ENCODE measurements at regions of chr5 and their contacts with region 1.

Region 1: GRCh38 chr5:139633295-139634027 is 14.7 kb upstream of the CXXC5 start:
- DNase-seq: peak; percentile 83
- H3K4me3 Mint-ChIP-seq: no peak overlapping the region
- H3K27ac Mint-ChIP-seq: no peak overlapping the region
- H3K4me1 Mint-ChIP-seq: peaks cover 34% of the 10 kb centered on the region
- H3K27me3 Mint-ChIP-seq: no peaks in the 10 kb centered on the region
- CTCF ChIP-seq: peak; percentile 99

Region 2: GRCh38 chr5:139422307-139422893 is 211.1 kb before region 1 on chr5:
- CTCF ChIA-PET with region 1: interaction called, 15 read pairs
- POLR2A ChIA-PET with region 1: interaction called, 3 read pairs
- intact Hi-C with region 1: loop called (anchors 2 kb)
- DNase-seq: peak; percentile 84
- H3K4me3 Mint-ChIP-seq: no peak overlapping the region
- H3K27ac Mint-ChIP-seq: peak overlapping the region; percentile 57
- H3K4me1 Mint-ChIP-seq: no peaks in the 10 kb centered on the region
- H3K27me3 Mint-ChIP-seq: no peaks in the 10 kb centered on the region
- CTCF ChIP-seq: peak; percentile 93

Region 3: DNA sequence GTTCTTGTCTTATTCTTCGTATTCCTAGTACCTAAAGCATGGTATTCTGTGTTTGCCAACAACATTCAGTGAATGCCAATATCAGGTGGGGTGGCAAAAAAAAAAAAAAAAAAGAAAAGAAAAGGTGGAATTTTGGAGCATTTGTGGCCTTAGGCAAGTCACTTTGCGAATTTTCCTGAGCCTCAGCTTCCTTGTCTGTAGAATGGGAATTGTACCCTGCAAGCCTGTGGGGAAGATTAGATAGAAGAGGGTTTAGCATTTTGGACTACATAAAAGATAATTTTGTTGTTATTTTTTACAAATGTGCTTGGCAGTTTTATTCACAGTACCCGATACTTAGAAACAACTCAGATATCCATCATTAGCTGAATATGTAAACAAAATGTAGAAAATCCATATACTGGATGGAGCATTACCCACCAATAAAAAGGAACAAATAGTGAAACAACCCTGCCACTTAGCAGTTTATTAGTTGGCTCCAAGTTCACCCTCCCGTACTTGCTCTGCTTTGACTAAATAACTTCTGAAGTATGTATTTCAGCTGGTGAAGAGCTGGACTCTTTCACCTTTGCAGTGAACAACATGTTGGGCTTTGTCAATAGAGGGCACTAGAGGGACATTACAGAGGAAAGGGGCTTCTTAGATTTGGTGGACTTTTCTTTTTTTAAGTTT is 58.7 kb before region 1 on chr5:
- CTCF ChIA-PET with region 1: interaction called, 36 read pairs
- POLR2A ChIA-PET with region 1: interaction called, 4 read pairs
- intact Hi-C with region 1: loop called (anchors 1 kb)
- DNase-seq: peak; percentile 70
- H3K4me3 Mint-ChIP-seq: no peak overlapping the region
- H3K27ac Mint-ChIP-seq: peak overlapping the region; percentile 71
- H3K4me1 Mint-ChIP-seq: peaks cover 42% of the 10 kb centered on the region
- H3K27me3 Mint-ChIP-seq: no peaks in the 10 kb centered on the region
- CTCF ChIP-seq: peak; percentile 75

Region 4: DNA sequence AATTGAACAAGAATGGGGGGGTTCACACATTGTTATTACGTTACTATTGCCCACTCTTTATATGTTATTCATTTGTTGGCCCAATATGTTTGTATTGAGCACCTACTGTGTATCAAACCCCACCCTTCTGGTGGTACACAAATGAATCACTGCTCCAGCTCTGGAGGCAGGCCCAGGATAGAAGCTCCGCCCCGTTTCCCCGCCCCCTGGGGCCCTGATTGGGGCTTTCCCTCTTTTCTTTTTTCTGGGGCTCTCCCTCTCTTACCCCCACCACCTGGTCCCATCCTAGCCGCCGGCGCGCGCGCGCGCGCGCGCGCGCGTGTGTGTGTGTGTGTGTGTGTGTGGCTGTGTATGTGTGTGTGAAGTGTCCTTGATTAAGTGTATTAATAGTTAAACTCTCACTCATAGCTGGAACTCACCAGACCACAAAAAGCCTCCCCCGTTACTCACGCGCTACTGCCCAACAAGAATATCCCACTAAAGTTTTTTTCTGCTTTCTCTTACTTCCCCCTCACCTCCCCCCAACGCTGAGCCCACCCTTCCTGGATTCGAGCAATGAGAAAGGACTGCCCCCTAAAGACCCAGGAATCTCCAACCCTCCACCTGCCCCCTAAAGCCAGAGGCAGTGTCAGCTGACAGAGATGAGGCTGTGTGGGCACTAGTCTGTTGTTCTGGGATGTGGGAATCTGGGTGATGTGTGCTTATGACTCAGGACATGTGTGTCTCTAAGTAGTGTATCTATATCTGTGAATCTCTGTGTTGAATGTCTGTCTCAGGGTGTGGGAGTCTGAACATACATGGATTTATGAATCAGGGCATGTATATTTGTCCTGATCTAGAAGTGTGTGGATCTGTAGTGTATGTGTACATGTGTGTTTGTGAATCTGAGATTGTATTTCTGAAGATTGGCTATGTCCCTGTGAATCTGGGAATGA is 18.7 kb after region 1 on chr5:
- CTCF ChIA-PET with region 1: interaction called, 62 read pairs
- POLR2A ChIA-PET with region 1: interaction called, 46 read pairs
- intact Hi-C with region 1: loop called (anchors 1 kb)
- DNase-seq: peak; percentile 87
- H3K4me3 Mint-ChIP-seq: peak overlapping the region; percentile 87
- H3K27ac Mint-ChIP-seq: peak overlapping the region; percentile 33
- H3K4me1 Mint-ChIP-seq: peaks cover 30% of the 10 kb centered on the region
- H3K27me3 Mint-ChIP-seq: no peaks in the 10 kb centered on the region
- CTCF ChIP-seq: no peak

Region 5: DNA sequence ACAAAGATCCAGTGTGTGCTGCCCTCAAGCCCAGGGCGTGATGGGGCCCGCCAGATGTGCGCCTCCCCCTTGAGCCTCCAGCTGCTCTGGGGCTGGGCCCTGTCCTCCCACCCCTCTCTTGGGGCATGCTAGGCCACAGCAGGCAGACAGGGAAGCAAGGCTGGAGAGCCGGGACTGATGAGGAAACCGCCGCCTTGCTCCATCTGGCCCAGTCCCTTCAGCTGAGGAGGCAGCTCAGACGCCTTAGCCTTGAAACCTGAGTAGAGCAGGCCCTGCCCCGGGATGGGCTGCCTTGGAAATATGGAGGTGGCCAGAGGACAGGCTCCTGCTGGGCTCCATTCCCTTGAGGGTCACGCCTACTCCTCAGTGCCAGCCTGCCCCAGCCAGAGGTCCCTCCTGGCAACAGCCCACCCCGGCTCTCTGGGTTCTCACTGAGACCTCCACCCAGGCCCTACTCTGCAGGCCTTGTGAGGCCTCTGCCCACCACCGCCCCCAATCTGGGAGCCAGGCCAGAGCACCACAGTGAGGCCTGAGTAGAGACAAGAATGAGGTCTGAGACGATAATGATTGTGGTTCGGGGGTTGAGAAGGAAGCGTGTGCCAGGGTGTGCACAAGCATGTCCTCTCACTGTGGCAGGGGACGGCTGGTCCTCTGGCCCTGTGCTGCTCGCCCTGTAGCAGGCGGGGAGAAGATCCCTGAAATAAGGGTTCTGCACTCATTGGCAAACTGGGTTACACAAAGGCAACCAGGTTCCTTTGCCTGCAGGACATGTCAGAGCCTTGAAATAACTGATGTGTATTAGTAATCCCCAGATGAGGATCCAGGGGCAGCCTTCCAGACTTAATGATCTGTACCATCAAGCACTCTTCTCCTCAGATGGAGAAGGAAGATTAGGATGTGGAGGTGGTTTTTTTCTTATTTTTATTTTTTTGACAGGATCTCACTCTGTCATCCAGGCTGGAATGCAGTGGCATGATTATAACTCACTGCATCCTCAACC is 45.6 kb after region 1 on chr5:
- CTCF ChIA-PET with region 1: interaction called, 18 read pairs
- POLR2A ChIA-PET with region 1: no interaction called
- intact Hi-C with region 1: no loop called
- DNase-seq: no peak
- H3K4me3 Mint-ChIP-seq: no peak overlapping the region
- H3K27ac Mint-ChIP-seq: no peak overlapping the region
- H3K4me1 Mint-ChIP-seq: peaks cover 6% of the 10 kb centered on the region
- H3K27me3 Mint-ChIP-seq: no peaks in the 10 kb centered on the region
- CTCF ChIP-seq: no peak

Region 6: GRCh38 chr5:139696894-139697658 is 63.6 kb after region 1 on chr5:
- CTCF ChIA-PET with region 1: interaction called, 321 read pairs
- POLR2A ChIA-PET with region 1: interaction called, 3 read pairs
- intact Hi-C with region 1: no loop called
- DNase-seq: no peak
- H3K4me3 Mint-ChIP-seq: no peak overlapping the region
- H3K27ac Mint-ChIP-seq: no peak overlapping the region
- H3K4me1 Mint-ChIP-seq: no peaks in the 10 kb centered on the region
- H3K27me3 Mint-ChIP-seq: no peaks in the 10 kb centered on the region
- CTCF ChIP-seq: no peak